Transverse colon (tissue), 4 donors: ENCODE measurements at regions of chr17 and their contacts with region 1.

Region 1: DNA sequence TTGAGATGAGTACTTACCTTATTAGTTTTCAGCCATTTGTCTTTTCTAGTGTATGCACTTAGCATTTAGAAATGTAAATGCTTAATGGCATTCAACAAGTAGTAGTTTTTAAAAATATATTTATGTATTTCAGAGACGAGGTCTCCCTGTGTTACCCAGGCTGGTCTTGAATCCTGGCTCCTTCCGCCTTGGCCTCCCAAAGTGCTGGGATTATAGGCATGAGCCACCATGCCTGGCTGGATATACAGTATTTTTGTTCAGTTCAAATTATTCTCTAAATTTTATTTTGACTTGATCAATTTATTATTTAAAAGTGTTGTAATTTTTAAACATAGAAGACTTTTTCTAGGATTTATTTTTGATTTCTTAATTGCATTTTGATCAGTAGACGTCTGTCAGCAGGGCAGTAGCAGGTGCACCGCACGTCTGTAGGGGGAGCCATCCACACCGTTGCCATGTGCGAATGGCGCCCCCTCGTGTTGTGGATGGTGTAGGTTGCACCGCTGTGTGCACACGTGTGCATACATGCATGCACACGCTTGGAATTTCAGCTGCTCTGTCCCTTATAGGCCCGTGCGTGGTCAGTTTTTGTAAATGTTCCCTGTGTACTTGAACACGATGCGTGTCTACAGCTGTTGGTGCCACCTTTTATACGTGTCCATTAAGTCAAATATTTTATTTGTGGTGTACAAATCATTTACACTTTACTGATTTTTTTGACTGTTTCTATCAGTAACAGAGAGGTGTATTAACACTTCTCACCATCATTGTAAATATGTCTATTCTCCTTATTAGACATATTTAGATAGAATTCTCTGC is 30.6 kb downstream of the RPTOR start:
- DNase-seq: peak; percentile 91
- H3K4me3 ChIP-seq: no peak overlapping the region
- H3K27ac ChIP-seq: no peak overlapping the region
- H3K4me1 ChIP-seq: no peaks in the 10 kb centered on the region
- H3K27me3 ChIP-seq: no peaks in the 10 kb centered on the region
- CTCF ChIP-seq: peak; percentile 98 to 100 (median 99)
- EP300 ChIP-seq: no peak
- POLR2A ChIP-seq: no peak

Region 2: GRCh38 chr17:80477647-80478478 is 97.4 kb before region 1 on chr17:
- in situ Hi-C with region 1: no loop called
- intact Hi-C with region 1: loop called (anchors 2 kb)
- DNase-seq: peak; percentile 35
- H3K4me3 ChIP-seq: peak overlapping the region in 3 of 4 donors; percentile 33 to 50 (median 37)
- H3K27ac ChIP-seq: peak overlapping the region in 1 of 4 donors; percentile 81
- H3K4me1 ChIP-seq: peaks cover 2 to 43% (median 39%) of the 10 kb centered on the region in 4 donors
- H3K27me3 ChIP-seq: peaks cover 100% of the 10 kb centered on the region
- CTCF ChIP-seq: peak in 3 of 5 experiments; percentile 29 to 42 (median 35)
- EP300 ChIP-seq: no peak
- POLR2A ChIP-seq: no peak

Region 3: GRCh38 chr17:82461827-82462524 is 1886.7 kb after region 1 on chr17:
- in situ Hi-C with region 1: no loop called
- intact Hi-C with region 1: no loop called
- DNase-seq: no peak
- H3K4me3 ChIP-seq: no peak overlapping the region
- H3K27ac ChIP-seq: no peak overlapping the region
- H3K4me1 ChIP-seq: peaks cover 8 to 22% (median 18%) of the 10 kb centered on the region in 4 donors
- H3K27me3 ChIP-seq: no peaks in the 10 kb centered on the region
- CTCF ChIP-seq: no peak
- EP300 ChIP-seq: no peak
- POLR2A ChIP-seq: no peak